Psoas muscle (tissue), 8 donors: ENCODE measurements at regions of chr17 and their contacts with region 1.

Region 1: GRCh38 chr17:43388359-43389045 is 10.3 kb upstream of the ARL4D start:
- DNase-seq: peak; percentile 93 to 95
- ATAC-seq: peak; percentile 89 to 92 (median 92)
- H3K4me3 ChIP-seq: peak overlapping the region; percentile 81
- H3K27ac ChIP-seq: peak overlapping the region; percentile 98
- H3K4me1 ChIP-seq: peaks cover 5% of the 10 kb centered on the region
- H3K27me3 ChIP-seq: no peaks in the 10 kb centered on the region
- CTCF ChIP-seq: no peak

Region 2: GRCh38 chr17:43338886-43339516 is 49.5 kb before region 1 on chr17:
- intact Hi-C with region 1: no loop called
- DNase-seq: peak; percentile 79 to 89
- ATAC-seq: peak in 1 of 4 donors; percentile 46
- H3K4me3 ChIP-seq: no peak overlapping the region
- H3K27ac ChIP-seq: no peak overlapping the region
- H3K4me1 ChIP-seq: peaks cover 13% of the 10 kb centered on the region
- H3K27me3 ChIP-seq: no peaks in the 10 kb centered on the region
- CTCF ChIP-seq: peak; percentile 86

Region 3: DNA sequence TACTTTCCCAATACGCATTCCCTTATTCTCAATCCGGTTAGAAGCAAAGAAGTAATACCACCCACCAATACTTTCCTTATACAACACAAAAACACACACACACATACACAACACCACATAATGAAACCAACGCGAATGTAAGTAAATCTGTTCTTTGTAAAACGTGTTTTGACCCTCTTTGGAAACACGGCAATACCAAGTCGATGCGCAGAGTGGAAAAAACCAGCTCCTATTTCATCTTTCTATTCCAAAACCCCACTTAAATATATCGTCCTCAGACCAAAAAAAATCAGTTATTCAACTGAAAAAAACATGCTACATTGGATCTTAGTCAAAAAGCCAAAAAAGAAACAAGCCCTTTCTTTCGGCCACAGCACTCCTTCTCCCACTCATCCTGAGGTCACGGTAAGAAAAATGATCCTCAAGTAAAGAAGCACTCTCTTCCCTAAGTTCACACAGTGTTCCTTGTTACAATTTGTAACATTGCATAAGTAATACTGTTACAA is 20.7 kb before region 1 on chr17:
- intact Hi-C with region 1: loop called (anchors 2 kb)
- DNase-seq: no peak
- ATAC-seq: peak; percentile 0 to 23 (median 4)
- H3K4me3 ChIP-seq: peak overlapping the region; percentile 72
- H3K27ac ChIP-seq: peak overlapping the region; percentile 98
- H3K4me1 ChIP-seq: peaks cover 17% of the 10 kb centered on the region
- H3K27me3 ChIP-seq: no peaks in the 10 kb centered on the region
- CTCF ChIP-seq: no peak